GM12878 (cell line): ENCODE measurements at regions of chr2 and their contacts with region 1.

Region 1: DNA sequence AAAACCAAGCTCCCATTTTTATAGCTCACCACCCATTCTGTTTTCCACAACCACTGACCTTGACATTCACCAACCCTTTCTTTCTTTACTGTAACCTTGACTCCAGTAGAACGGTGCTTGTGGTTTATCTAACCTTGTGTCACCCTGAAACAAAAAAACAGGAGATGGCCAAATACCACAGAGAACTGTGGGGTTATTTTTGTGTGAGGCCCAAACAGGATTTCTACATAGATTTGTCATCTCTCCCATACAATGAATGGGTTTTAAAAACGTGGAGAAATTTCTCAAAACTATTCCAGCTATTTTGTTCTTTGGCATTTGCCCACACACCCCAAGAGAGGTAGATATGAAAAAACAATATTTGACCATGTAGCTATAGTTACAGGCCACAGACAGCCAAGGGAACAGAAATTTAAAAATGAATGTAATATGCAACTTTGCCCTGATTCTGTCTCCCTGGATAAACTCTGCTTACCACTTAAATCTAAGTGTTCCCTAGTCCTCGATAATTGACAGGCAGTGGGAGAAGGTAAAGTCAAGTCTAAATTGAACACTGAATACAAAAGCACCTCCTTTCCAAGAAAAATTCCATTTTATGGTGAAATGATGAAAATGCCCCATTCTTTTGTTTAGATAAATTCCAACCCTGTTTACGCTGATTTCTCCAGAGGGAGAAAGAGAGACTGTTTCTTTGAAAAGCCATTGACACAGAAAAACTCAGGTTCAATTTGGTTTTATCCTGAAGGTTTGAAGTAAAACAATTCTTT is 231.2 kb upstream of the TANK start:
- DNase-seq: no peak
- ATAC-seq: no peak
- H3K4me3 ChIP-seq: no peak overlapping the region
- H3K27ac ChIP-seq: no peak overlapping the region
- H3K4me1 ChIP-seq: no peaks in the 10 kb centered on the region
- H3K27me3 ChIP-seq: no peaks in the 10 kb centered on the region
- CTCF ChIP-seq: no peak
- EP300 ChIP-seq: no peak
- POLR2A ChIP-seq: no peak
- RAD21 ChIP-seq: no peak

Region 2: DNA sequence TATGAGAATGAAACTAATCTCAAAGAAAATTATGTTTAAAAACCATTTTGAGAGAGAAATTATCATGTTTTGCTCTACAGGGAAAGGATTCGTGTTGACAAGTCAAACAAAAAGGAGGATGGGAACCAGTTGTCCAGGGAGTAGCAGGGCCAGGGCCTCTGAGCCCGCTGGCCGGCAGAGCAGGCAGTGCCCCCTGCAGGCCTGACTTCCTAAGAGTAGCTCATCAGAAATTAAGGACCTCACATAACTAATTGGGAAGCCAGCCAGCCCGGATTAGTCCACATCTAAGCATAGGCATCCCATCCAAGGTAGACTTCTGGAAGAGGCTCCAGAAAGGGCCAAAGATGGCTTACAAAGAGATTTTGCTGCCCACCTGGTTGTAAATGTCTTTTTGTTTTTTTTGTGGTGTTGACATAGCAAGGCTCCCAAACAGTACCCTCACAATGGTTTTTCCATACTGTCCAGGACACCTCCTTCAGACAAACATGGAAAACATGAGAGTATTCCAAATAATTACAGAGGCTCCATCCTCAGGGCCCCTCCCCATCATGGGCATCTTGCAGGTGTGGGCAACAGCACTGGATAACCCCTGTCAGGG is 10.0 kb before region 1 on chr2:
- CTCF ChIA-PET with region 1: interaction called, 12 read pairs
- POLR2A ChIA-PET with region 1: no interaction called
- RAD21 ChIA-PET with region 1: no interaction called
- SMC1A ChIA-PET with region 1: interaction called, 3 read pairs
- in situ Hi-C with region 1: no loop called
- intact Hi-C with region 1: no loop called
- DNase-seq: no peak
- ATAC-seq: peak; percentile 71
- H3K4me3 ChIP-seq: no peak overlapping the region
- H3K27ac ChIP-seq: no peak overlapping the region
- H3K4me1 ChIP-seq: no peaks in the 10 kb centered on the region
- H3K27me3 ChIP-seq: no peaks in the 10 kb centered on the region
- CTCF ChIP-seq: peak; percentile 42 to 58 (median 54); a peak in 4 of 6 replicates
- EP300 ChIP-seq: no peak
- POLR2A ChIP-seq: no peak
- RAD21 ChIP-seq: peak; percentile 33

Region 3: GRCh38 chr2:161017780-161018470 is 88.9 kb after region 1 on chr2:
- CTCF ChIA-PET with region 1: no interaction called
- POLR2A ChIA-PET with region 1: no interaction called
- RAD21 ChIA-PET with region 1: no interaction called
- SMC1A ChIA-PET with region 1: no interaction called
- in situ Hi-C with region 1: no loop called
- intact Hi-C with region 1: no loop called
- DNase-seq: no peak
- ATAC-seq: no peak
- H3K4me3 ChIP-seq: no peak overlapping the region
- H3K27ac ChIP-seq: no peak overlapping the region
- H3K4me1 ChIP-seq: no peaks in the 10 kb centered on the region
- H3K27me3 ChIP-seq: no peaks in the 10 kb centered on the region
- CTCF ChIP-seq: no peak
- EP300 ChIP-seq: no peak
- POLR2A ChIP-seq: no peak
- RAD21 ChIP-seq: no peak